ENCODE measurements at regions of chr12 and their contacts with region 1.

Region 1: DNA sequence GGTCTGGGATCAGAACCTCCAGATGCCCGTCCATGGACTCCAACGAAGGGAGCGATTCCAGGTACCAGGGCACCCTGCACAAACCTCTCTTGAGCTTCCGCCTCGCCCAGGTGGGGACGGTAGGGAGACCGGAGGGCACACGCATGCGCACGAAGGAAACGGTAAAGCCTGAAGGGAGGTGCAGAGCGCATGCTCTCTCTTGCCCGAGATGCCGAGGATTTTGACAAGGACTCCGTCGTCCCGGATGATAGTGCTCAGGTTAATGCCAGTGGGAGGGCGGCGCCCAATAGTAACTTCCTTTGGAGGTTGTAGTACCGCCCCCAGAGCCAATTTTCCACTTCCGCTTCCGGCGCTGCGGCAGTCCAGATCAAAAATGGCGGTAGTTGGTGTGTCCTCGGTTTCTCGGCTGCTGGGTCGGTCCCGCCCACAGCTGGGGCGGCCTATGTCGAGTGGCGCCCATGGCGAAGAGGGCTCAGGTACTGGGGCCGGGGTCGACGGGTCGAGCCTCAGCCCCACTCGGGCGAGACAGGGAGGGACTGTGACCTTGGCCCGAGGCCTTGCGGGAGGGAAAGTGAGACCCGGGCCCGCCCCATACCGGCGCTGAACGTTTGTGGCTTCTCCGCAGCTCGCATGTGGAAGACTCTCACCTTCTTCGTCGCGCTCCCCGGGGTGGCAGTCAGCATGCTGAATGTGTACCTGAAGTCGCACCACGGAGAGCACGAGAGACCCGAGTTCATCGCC is at the start of gene COX6A1:
- DNase-seq: peak; percentile 99
- ATAC-seq: peak; percentile 97
- H3K4me3 ChIP-seq: peak within 1 kb of the TSS; percentile 89
- H3K27ac ChIP-seq: peak within 1 kb of the TSS; percentile 53
- H3K4me1 ChIP-seq: no peaks in the 10 kb centered on the region; the same call in 1 of the 2 replicates
- H3K27me3 ChIP-seq: no peaks in the 10 kb centered on the region
- CTCF ChIP-seq: peak in 2 of 3 experiments; percentile 18 to 32; a peak in 1 of 6 replicates
- EP300 ChIP-seq: 0 out of 4 replicates have a peak, but pooled peaks of 1 of the 2 experiments have one; percentile 27
- POLR2A ChIP-seq: peak; percentile 87
- RAD21 ChIP-seq: no peak
- polyA plus RNA-seq, gene COX6A1: 2,509 to 2,723 TPM

Region 2: GRCh38 chr12:120317224-120318105 is 120.5 kb before region 1 on chr12:
- CTCF ChIA-PET with region 1: no interaction called
- POLR2A ChIA-PET with region 1: interaction called, 3 read pairs
- RAD21 ChIA-PET with region 1: no interaction called
- SMC1A ChIA-PET with region 1: no interaction called
- in situ Hi-C with region 1: loop called (anchors 10 kb)
- intact Hi-C with region 1: no loop called
- DNase-seq: peak; percentile 97
- ATAC-seq: peak; percentile 100
- H3K4me3 ChIP-seq: peak overlapping the region; percentile 73
- H3K27ac ChIP-seq: peak overlapping the region; percentile 80
- H3K4me1 ChIP-seq: no peaks in the 10 kb centered on the region
- H3K27me3 ChIP-seq: no peaks in the 10 kb centered on the region
- CTCF ChIP-seq: peak; percentile 52 to 53 (median 53)
- EP300 ChIP-seq: no peak; a peak in 1 of 4 replicates
- POLR2A ChIP-seq: peak; percentile 95
- RAD21 ChIP-seq: no peak

Region 3: GRCh38 chr12:120356567-120357030 is 81.3 kb before region 1 on chr12:
- CTCF ChIA-PET with region 1: interaction called, 4 read pairs
- POLR2A ChIA-PET with region 1: no interaction called
- RAD21 ChIA-PET with region 1: no interaction called
- SMC1A ChIA-PET with region 1: no interaction called
- in situ Hi-C with region 1: loop called (anchors 5 kb)
- intact Hi-C with region 1: no loop called
- DNase-seq: peak; percentile 17
- ATAC-seq: peak; percentile 97
- H3K4me3 ChIP-seq: no peak overlapping the region
- H3K27ac ChIP-seq: no peak overlapping the region
- H3K4me1 ChIP-seq: no peaks in the 10 kb centered on the region
- H3K27me3 ChIP-seq: peaks cover 0 to 1% of the 10 kb centered on the region in 2 experiments; a peak in 1 of 4 replicates
- CTCF ChIP-seq: peak; percentile 85 to 94 (median 89)
- EP300 ChIP-seq: no peak
- POLR2A ChIP-seq: no peak
- RAD21 ChIP-seq: peak; percentile 75

Region 4: DNA sequence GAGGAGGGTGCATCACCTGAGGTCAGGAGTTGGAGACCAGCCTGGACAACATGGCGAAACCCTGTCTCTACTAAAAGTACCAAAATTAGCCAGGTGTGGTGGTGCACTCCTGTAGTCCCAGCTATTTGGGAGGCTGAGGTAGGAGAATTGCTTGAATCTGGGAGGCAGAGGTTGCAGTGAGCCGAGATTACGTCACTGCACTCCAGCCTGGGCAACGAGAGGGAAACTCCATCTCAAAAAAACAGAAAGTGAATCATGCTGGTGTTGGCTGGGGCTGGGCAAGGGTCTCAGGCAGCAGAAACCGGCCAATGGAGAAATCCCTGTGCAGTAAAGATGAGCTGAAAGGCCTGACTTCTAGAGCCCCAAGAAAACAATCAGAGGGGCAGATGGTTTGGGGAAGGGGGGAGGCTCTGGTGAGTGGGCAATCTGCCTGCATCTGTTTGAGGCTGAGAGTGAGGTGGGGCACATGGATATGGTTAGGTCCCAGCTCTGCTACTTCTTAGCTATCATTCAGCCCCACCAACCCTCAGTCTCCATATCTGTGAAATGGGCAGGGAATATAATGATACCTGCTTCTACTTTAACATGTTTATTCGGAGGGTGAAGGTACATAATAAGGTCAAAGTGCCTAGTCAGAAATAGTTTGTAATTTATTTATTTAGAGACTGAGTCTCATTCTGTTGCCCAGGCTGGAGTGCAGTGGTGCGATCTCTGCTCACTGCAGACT is 21.3 kb before region 1 on chr12:
- CTCF ChIA-PET with region 1: no interaction called
- POLR2A ChIA-PET with region 1: no interaction called
- RAD21 ChIA-PET with region 1: no interaction called
- SMC1A ChIA-PET with region 1: no interaction called
- in situ Hi-C with region 1: no loop called
- intact Hi-C with region 1: no loop called
- DNase-seq: no peak
- ATAC-seq: no peak
- H3K4me3 ChIP-seq: no peak overlapping the region
- H3K27ac ChIP-seq: no peak overlapping the region
- H3K4me1 ChIP-seq: no peaks in the 10 kb centered on the region
- H3K27me3 ChIP-seq: no peaks in the 10 kb centered on the region
- CTCF ChIP-seq: no peak
- EP300 ChIP-seq: no peak
- POLR2A ChIP-seq: no peak
- RAD21 ChIP-seq: no peak

Region 5: GRCh38 chr12:120495723-120496412 is 57.9 kb after region 1 on chr12 and contains the start of gene DYNLL1:
- CTCF ChIA-PET with region 1: interaction called, 11 read pairs
- POLR2A ChIA-PET with region 1: interaction called, 5 read pairs
- RAD21 ChIA-PET with region 1: interaction called, 4 read pairs
- SMC1A ChIA-PET with region 1: interaction called, 3 read pairs
- in situ Hi-C with region 1: no loop called
- intact Hi-C with region 1: no loop called
- DNase-seq: peak; percentile 93
- ATAC-seq: peak; percentile 97
- H3K4me3 ChIP-seq: peak within 1 kb of the TSS; percentile 99
- H3K27ac ChIP-seq: peak within 1 kb of the TSS; percentile 77
- H3K4me1 ChIP-seq: peaks cover 4% of the 10 kb centered on the region
- H3K27me3 ChIP-seq: no peaks in the 10 kb centered on the region
- CTCF ChIP-seq: no peak
- EP300 ChIP-seq: peak in 1 of 2 experiments; percentile 13; a peak in 1 of 4 replicates
- POLR2A ChIP-seq: peak; percentile 97
- RAD21 ChIP-seq: no peak
- polyA plus RNA-seq, gene DYNLL1: 744 to 796 TPM